Gastrocnemius medialis (tissue), 4 donors: ENCODE measurements at regions of chr11 and their contacts with region 1.

Region 1: GRCh38 chr11:44203270-44204043 is 106.5 kb downstream of the ALX4 start:
- DNase-seq: peak; percentile 67 to 78
- ATAC-seq: peak; percentile 95 to 96
- H3K4me3 ChIP-seq: no peak overlapping the region
- H3K27ac ChIP-seq: peak overlapping the region; percentile 42 to 71 (median 62)
- H3K4me1 ChIP-seq: peaks cover 25 to 36% of the 10 kb centered on the region in 2 donors
- H3K27me3 ChIP-seq: no peaks in the 10 kb centered on the region
- CTCF ChIP-seq: no peak
- POLR2A ChIP-seq: peak in 1 of 2 donors; percentile 42

Region 2: GRCh38 chr11:44167046-44167445 is 36.4 kb before region 1 on chr11:
- in situ Hi-C with region 1: no loop called
- intact Hi-C with region 1: loop called (anchors 5 kb)
- DNase-seq: no peak
- ATAC-seq: no peak
- H3K4me3 ChIP-seq: no peak overlapping the region
- H3K27ac ChIP-seq: no peak overlapping the region
- H3K4me1 ChIP-seq: peaks cover 7 to 12% of the 10 kb centered on the region in 2 donors
- H3K27me3 ChIP-seq: no peaks in the 10 kb centered on the region
- CTCF ChIP-seq: no peak
- POLR2A ChIP-seq: no peak

Region 3: GRCh38 chr11:44243595-44244343 is 40.3 kb after region 1 on chr11:
- in situ Hi-C with region 1: no loop called
- intact Hi-C with region 1: loop called (anchors 2 kb)
- DNase-seq: no peak
- ATAC-seq: no peak
- H3K4me3 ChIP-seq: no peak overlapping the region
- H3K27ac ChIP-seq: no peak overlapping the region
- H3K4me1 ChIP-seq: peaks cover 65 to 67% of the 10 kb centered on the region in 2 donors
- H3K27me3 ChIP-seq: no peaks in the 10 kb centered on the region
- CTCF ChIP-seq: no peak
- POLR2A ChIP-seq: no peak

Region 4: DNA sequence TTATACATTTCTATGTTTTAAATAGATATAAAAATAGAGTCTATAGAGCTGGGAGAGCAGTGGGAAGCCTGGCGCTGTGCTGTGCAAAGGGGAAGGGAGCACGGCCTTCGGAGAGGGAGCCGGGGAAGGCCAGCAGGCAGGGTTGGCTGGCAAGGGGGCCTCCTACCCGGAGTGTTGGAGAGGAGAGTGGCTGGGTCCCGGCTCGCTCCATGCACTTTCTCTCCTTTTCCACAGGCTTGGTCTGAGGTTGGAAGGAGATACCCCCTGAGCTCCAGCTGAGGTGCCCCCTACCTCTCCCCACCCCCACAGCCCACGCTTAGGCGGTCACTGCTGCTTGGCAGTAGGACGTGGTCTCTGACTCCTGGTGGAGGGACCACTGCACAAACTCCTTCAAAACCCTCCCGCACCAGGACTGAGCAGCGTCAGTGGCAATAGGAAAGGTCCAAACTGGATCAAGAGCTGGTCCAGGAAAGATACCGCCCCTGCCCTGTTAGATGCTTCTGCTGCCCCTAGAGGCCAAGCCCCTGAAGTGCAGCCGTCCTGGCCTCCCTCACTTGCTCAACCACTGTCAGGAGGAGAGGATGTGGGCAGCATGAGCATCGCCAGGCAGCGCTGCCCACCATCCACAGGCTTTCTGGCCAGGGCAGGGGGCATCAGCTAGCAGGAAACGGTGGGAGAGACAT is 1029.8 kb after region 1 on chr11:
- in situ Hi-C with region 1: no loop called
- intact Hi-C with region 1: no loop called
- DNase-seq: peak; percentile 15 to 56
- ATAC-seq: peak; percentile 79 to 87
- H3K4me3 ChIP-seq: no peak overlapping the region
- H3K27ac ChIP-seq: no peak overlapping the region
- H3K4me1 ChIP-seq: no peaks in the 10 kb centered on the region
- H3K27me3 ChIP-seq: peaks cover 0 to 6% (median 0%) of the 10 kb centered on the region in 3 donors
- CTCF ChIP-seq: peak; percentile 55 to 89 (median 77)
- POLR2A ChIP-seq: no peak